Activated CD8-positive, alpha-beta T cell treated with anti-CD3 and anti-CD28 coated beads, Interleukin-2, amount 10 ng/mL, durations not matched to agents 7 days and 5 days (primary cell): ENCODE measurements at regions of chr18 and their contacts with region 1.

Region 1: GRCh38 chr18:21704603-21705364 is at the start of gene ABHD3:
- DNase-seq: peak; percentile 94
- ATAC-seq: peak; percentile 96
- H3K4me3 Mint-ChIP-seq: peak within 1 kb of the TSS; percentile 97
- H3K27ac Mint-ChIP-seq: peak within 1 kb of the TSS; percentile 97
- H3K4me1 Mint-ChIP-seq: peaks cover 41% of the 10 kb centered on the region
- H3K27me3 Mint-ChIP-seq: no peaks in the 10 kb centered on the region
- total RNA-seq, gene ABHD3: 54.0 to 57.5 TPM

Region 2: DNA sequence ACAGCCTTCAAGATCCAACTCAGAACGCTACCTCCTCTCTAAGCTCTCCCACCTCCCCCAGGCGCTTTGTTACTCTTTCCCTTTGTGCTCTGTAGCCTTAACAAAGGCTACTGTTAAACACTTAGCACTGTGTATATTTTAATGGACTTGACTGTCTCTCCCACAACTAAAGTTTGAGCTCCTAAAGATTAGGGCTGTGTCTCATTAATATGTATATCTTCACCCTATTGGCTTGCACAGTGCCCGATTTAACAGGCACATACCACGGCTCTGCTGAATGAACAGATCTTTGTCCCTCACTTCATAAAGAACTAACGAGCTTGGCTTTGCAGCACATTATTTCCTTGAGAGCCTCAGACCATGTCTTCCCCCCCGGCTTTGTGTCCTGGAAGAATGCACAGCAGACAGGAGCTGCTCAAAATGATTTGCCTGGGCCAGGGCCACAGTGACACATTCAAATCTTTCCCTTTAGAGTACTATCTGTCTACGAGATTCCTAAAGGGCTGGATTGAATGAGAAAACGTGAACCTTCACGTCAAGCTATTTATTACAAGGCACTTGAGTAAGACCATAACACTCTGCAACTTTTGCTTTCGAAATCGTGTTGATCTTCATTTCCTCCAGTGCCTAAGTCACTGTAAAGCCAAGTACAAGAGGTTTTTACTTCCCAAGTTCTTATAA is 22.3 kb before region 1 on chr18:
- CTCF ChIA-PET with region 1: interaction called, 7 read pairs
- POLR2A ChIA-PET with region 1: interaction called, 20 read pairs
- DNase-seq: peak; percentile 45
- ATAC-seq: peak; percentile 93
- H3K4me3 Mint-ChIP-seq: no peak overlapping the region
- H3K27ac Mint-ChIP-seq: no peak overlapping the region
- H3K4me1 Mint-ChIP-seq: peaks cover 3% of the 10 kb centered on the region
- H3K27me3 Mint-ChIP-seq: no peaks in the 10 kb centered on the region

Region 3: DNA sequence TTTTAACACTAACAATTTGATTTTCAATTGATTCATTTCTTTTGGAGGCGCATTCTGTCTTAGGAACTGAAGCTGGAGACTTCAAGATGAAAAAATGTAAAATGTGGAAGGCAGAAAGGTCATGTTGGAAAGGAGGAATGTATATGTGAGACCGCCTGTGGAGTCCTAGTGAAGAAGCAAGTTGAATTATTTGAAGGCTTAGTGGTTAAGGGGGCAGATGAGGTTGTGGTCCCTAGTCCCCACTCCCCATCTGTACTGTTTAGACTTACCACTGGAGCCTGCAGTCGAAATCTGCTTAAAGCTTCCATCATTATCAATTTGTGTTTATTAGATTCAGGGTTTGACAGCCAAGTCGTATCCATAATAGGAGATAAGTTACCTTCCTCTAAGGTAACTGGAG is 20.4 kb after region 1 on chr18:
- CTCF ChIA-PET with region 1: no interaction called
- POLR2A ChIA-PET with region 1: no interaction called
- DNase-seq: no peak
- ATAC-seq: no peak
- H3K4me3 Mint-ChIP-seq: no peak overlapping the region
- H3K27ac Mint-ChIP-seq: no peak overlapping the region
- H3K4me1 Mint-ChIP-seq: no peaks in the 10 kb centered on the region
- H3K27me3 Mint-ChIP-seq: peaks cover 2% of the 10 kb centered on the region

Region 4: DNA sequence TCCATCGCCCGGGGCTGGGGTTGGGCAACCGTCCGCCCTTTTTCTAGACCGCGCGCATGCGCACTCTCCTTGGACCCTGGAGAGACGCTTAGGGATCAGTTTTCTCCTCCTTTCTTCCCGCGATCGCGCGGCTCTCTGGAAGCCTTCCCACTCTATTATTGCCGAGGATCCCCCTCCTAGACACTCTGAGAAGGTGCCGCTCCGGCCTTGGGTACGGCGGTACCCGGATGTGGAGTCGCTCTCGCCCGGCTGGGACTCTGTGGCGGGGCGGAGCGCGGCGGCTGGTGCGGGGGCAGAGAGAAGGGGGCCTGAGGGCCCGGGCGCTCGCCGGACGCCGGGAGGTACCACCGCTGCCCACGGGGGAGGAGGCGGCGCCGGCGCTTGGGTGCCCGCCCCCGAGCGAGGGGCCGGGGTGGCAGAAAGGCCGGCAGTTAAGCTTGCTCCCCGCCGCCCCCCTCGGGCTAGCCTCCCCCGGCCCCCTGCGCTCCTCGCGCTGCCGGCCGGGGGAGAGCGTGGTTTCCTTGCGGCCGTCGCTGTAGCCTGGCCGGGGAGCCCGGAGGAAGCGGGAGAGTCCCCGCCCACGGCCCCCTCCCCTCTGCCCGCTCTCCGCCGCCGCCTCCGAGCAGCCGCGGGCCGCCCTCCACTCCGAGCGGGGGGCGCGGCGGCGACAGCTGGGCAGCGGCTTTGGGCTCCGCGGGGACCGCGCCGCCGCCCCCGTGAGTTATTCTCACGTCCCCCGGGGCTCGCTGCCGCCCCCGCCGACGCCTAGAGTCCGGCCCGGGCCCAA is 36.1 kb after region 1 on chr18 and contains the start of gene MIB1:
- CTCF ChIA-PET with region 1: interaction called, 9 read pairs
- POLR2A ChIA-PET with region 1: interaction called, 11 read pairs
- DNase-seq: no peak
- ATAC-seq: peak; percentile 76
- H3K4me3 Mint-ChIP-seq: peak within 1 kb of the TSS; percentile 88
- H3K27ac Mint-ChIP-seq: peak within 1 kb of the TSS; percentile 94
- H3K4me1 Mint-ChIP-seq: peaks cover 42% of the 10 kb centered on the region
- H3K27me3 Mint-ChIP-seq: peaks cover 15% of the 10 kb centered on the region
- total RNA-seq, gene MIB1: 32.6 to 37.4 TPM